Mammary epithelial cell (primary cell): ENCODE measurements at regions of chr1 and their contacts with region 1.

Region 1: DNA sequence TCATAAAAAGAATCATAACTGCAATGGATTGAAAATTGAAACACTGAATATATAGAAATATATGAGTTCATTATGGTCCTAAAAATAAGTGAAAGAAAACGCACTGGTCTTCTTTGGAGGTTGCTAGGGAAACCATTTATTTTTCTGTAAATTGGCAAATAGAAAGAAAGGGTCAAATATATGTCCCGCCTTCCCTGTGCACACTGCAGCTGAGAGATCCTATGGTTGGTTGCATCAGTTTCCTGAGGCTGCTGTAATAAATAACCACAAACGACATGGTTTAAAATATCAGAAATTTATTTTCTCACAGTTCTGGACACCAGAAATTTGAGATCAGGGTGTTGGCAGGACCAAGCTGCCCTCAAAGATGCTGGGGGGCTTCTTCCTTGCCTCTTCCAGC is 35.0 kb downstream of the CA6 start:
- DNase-seq: no peak
- H3K4me3 ChIP-seq: no peak overlapping the region
- H3K27ac ChIP-seq: no peak overlapping the region
- H3K4me1 ChIP-seq: peaks cover 4% of the 10 kb centered on the region
- H3K27me3 ChIP-seq: no peaks in the 10 kb centered on the region
- CTCF ChIP-seq: no peak

Region 2: DNA sequence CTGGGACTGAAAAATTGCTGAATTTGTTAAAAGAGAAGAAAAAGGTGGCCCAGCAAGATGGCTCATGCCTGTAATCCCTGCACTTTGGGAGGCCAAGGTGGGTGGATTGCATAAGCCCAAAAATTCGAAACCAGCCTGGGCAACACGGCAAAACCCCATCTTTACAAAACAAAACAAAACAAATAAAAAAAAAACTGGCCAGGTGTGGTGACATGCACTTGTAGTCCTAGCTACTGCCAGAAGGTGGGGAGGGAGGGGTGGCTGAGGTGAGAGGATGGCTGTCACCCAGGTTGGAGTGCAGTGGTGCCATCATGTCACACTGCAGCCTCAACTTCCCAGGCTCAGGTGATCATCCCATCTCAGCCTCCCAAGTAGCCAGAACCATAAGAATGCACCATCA is 186.1 kb before region 1 on chr1:
- CTCF ChIA-PET with region 1: no interaction called
- dilution Hi-C with region 1: no loop called
- in situ Hi-C with region 1: no loop called
- intact Hi-C with region 1: no loop called
- DNase-seq: no peak
- H3K4me3 ChIP-seq: no peak overlapping the region
- H3K27ac ChIP-seq: no peak overlapping the region
- H3K4me1 ChIP-seq: peaks cover 12% of the 10 kb centered on the region
- H3K27me3 ChIP-seq: no peaks in the 10 kb centered on the region
- CTCF ChIP-seq: peak in 1 of 2 donors; percentile 18

Region 3: DNA sequence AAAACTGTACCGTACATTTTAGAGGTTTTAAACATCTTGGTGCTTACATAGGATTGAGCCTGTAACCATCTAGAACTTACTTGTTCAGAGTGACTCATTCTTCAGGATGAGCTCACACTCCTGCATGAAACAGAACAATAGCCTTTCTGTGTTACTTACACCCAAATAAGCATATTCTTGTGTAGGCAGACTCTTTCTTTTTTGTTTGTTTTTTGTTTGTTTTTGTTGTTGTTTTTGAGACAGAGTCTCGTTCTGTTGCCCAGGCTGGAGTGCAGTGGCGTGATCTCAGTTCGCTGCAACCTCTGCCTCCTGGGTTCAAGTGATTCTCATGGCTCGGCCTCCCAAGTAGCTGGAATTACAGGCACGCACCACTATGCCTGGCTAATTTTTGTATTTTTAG is 38.8 kb before region 1 on chr1:
- CTCF ChIA-PET with region 1: interaction called, 4 read pairs
- dilution Hi-C with region 1: loop called (anchors 5 kb)
- in situ Hi-C with region 1: no loop called
- intact Hi-C with region 1: no loop called
- DNase-seq: peak; percentile 83
- H3K4me3 ChIP-seq: no peak overlapping the region
- H3K27ac ChIP-seq: peak overlapping the region; percentile 37
- H3K4me1 ChIP-seq: peaks cover 12% of the 10 kb centered on the region
- H3K27me3 ChIP-seq: no peaks in the 10 kb centered on the region
- CTCF ChIP-seq: no peak

Region 4: DNA sequence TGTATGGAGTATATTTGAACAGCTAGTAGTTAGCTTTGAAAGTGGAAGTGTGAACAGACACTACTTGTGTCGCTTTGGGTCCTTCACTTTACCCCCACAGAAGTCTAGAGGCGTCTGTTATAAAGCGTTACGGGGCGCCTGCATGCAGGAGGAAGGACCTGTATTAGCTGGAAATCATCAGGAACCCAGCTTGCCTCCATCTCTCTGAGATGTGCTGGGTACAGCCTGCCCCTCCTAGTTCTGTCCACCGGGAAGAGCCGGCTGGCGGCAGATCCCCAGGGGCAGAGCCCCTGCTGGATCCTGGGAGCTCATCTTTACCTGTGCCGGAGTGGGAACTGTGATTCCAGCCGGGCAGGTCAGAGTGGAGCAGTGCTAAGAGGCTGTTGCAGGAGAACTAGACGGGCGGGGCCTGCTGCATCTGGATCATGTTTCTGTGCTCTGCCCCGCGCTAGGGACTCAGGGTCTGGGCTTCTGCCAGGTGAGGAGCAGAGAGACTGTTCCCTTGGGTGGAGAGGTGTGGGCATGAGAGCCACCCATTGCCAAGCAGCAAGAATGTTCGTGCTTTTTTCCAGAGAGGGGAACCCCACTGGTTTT is 289.7 kb after region 1 on chr1:
- CTCF ChIA-PET with region 1: no interaction called
- dilution Hi-C with region 1: no loop called
- in situ Hi-C with region 1: no loop called
- intact Hi-C with region 1: no loop called
- DNase-seq: peak; percentile 20
- H3K4me3 ChIP-seq: no peak overlapping the region
- H3K27ac ChIP-seq: no peak overlapping the region
- H3K4me1 ChIP-seq: peaks cover 5% of the 10 kb centered on the region
- H3K27me3 ChIP-seq: no peaks in the 10 kb centered on the region
- CTCF ChIP-seq: no peak

Region 5: GRCh38 chr1:9399510-9400424 is 419.1 kb after region 1 on chr1:
- CTCF ChIA-PET with region 1: no interaction called
- dilution Hi-C with region 1: no loop called
- in situ Hi-C with region 1: no loop called
- intact Hi-C with region 1: no loop called
- DNase-seq: no peak
- H3K4me3 ChIP-seq: no peak overlapping the region
- H3K27ac ChIP-seq: no peak overlapping the region
- H3K4me1 ChIP-seq: peaks cover 7% of the 10 kb centered on the region
- H3K27me3 ChIP-seq: no peaks in the 10 kb centered on the region
- CTCF ChIP-seq: no peak